ENCODE measurements at regions of chr2 and their contacts with region 1.

Region 1: DNA sequence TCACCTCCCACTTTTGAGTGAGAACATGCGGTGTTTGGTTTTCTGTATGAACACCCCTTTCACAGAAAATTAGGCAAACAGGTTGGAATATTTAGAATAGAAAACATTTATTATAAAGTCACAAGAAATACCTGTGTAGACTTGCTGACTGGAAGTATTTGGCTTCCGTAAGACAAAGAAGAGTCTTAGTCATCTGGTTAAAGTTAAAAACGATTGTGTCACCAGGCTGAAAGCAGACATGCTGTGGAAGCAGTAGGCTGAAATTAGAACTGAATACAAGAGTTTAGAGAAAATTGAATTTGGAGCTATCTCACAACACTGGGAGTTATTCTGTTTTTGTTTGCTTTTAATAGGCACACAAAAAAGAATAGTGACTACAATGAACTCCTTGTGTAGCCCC is 16.2 kb upstream of the CLASP1 start:
- DNase-seq: no peak
- ATAC-seq: peak in 1 of 2 donors; percentile 51

Region 2: DNA sequence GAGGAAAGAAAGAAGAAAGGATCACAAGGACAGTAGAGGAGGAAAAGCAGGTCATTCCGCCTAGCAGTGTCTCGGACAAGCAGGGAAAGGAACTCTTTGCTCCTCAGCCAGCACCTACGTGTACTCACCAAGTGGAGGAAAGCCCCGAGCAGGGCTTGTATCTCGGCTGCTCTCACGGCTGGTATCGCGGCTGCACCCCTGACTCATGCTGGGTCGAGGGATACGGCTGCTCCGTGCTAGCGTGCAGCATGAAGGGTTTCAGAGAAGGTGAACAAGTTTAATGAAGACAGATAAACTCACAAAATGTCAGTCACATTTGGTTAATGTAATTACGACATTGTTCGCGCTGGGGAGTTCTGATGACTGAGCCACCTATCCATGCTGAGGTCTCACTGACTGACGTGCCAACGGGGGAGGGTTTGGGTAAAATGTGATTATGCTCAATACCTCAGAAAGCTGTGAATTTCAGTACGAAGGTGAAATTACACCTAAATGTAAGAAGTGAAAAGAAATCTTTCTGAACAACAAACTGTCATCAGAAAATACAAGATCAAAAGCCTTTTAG is 246.9 kb before region 1 on chr2:
- intact Hi-C with region 1: loop called in 1 of 2 experiments (anchors 5 kb)
- DNase-seq: no peak
- ATAC-seq: no peak